ENCODE measurements at regions of chr1 and their contacts with region 1.

Region 1: DNA sequence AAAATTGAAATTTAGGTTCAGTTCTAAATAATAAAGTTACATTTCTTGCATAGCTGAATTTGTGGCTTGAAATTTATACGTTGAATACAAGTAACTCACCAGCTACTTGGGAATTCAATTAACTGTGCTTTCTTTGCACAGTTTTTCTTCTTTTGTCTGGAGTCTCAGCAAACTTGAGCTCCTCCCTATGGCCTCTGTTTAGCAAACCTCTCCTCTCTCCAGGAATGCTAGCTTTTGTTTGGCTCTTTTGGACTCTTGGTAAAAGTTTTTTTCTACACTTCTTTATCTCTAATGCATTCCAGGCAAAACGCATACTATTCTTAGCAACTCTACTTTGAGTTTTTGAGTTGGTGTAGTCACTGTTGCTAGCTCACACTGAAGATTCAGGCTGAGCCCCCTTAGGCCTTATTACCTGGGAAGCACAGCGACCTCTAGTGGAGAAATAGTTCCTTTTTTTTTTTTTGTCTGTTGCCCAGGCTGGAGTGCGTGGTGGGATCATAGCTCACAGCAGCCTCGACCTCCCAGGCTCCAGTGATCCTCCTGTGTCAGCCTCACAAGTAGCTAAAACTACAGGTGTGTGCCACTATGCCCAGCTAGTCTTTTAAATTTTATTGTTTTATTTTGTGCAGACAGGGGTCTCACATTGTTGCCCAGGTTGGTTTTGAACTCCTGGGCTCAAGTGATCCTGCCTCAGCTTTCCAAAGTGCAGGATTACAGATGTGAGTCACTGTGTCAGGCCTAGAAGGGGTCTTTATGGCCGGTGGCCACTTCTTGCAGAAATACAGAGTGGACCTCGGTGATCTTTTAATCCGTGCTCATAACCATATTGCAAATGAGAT is 61.7 kb downstream of the CASQ2 start:
- DNase-seq: no peak
- ATAC-seq: peak; percentile 25 to 27
- H3K4me3 ChIP-seq: no peak overlapping the region
- H3K27ac ChIP-seq: no peak overlapping the region
- H3K4me1 ChIP-seq: peaks cover 12% of the 10 kb centered on the region
- H3K27me3 ChIP-seq: no peaks in the 10 kb centered on the region

Region 2: GRCh38 chr1:115609021-115609420 is 97.8 kb before region 1 on chr1:
- intact Hi-C with region 1: loop called in 3 of 4 experiments (anchors 2 to 10 kb)
- DNase-seq: no peak
- ATAC-seq: no peak
- H3K4me3 ChIP-seq: no peak overlapping the region
- H3K27ac ChIP-seq: no peak overlapping the region
- H3K4me1 ChIP-seq: peaks cover 2% of the 10 kb centered on the region
- H3K27me3 ChIP-seq: no peaks in the 10 kb centered on the region

Region 3: DNA sequence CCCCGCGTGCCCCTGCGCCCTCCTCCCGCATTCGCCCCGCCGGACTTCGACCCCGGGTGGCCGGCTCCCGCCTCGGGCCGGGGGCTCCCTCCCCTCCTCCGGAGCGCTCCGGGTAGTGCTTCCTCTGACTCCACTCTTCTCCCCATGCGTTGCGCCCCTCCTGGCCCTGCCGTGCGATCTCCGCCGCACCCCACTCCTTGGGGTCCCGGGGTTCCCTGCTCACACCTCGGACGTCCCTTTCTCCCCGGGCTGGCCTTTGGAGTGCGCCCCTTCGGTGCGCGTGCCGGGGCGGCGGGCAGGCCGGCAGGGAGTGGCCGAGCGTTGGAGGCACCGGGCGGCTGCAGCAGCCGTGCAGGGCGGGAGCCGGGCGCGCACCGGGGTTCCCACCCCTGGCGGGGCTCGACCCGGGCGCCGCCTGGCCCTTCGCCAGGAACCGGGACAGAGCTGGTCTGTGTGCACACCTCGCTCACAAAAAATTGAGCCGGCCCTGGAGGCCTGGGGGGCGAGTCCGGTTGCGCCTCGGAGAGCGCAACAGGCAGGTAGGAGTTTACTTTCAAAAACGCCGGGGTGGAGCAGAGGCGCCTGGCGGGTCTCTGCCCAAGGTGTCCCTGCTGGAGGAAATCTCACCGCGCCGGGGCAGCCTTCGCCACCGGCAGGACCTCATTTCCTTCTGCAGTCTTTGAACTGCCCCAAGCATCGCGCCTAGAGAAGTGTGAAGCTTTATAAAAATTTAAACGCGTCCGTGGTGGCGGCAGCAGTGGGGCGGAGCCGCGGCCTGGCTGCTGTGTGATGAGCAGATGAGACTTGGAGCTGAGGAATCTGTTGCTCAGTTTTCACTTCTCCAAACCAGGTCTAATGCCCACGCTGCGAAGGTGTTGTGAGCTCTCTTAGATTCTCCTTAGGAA is 64.4 kb before region 1 on chr1:
- intact Hi-C with region 1: loop called in 1 of 4 experiments (anchors 10 kb)
- DNase-seq: peak; percentile 39 to 75 (median 73)
- ATAC-seq: peak; percentile 61 to 63
- H3K4me3 ChIP-seq: peak overlapping the region; percentile 69
- H3K27ac ChIP-seq: peak overlapping the region; percentile 31
- H3K4me1 ChIP-seq: peaks cover under 1% of the 10 kb centered on the region
- H3K27me3 ChIP-seq: no peaks in the 10 kb centered on the region

Measured in right cardiac atrium (tissue), 5 donors.